T-cell (primary cell): ENCODE measurements at regions of chr7 and their contacts with region 1.

Region 1: DNA sequence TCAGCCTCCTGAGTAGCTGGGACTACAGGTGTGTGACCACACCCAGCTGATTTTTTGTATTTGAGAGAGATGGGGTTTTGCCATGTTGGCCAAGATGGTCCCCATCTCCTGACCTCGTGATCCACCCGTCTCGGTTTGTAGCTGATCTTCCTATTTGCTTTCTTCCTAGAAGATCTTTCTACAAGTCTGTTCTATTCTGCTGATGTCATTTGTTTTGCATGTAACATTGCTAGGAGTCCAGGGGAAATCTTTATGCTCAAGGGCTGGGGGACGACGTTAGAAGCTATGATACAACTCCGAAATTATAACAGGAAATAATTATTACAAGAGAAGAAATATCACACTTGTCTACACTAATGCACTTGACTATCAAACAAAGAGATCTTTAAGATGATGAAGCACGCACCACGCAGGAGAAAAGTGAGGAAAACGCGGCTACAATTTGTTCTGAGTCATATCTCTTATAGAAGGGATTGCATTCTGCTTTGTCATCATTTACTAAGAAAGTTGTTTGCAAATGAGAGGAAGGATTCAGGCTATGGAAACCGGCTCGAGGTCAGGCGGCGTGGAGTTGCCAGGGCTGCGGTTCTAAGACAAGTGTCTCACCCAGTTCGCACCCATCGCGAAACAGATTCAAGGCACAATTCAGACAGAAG is 103.0 kb upstream of the CARD11 start:
- DNase-seq: peak in 1 of 35 experiments; percentile 3
- ATAC-seq: no peak
- H3K4me3 ChIP-seq: no peak overlapping the region
- H3K4me3 Mint-ChIP-seq: no peak overlapping the region
- H3K27ac ChIP-seq: no peak overlapping the region
- H3K27ac Mint-ChIP-seq: no peak overlapping the region
- H3K4me1 ChIP-seq: no peaks in the 10 kb centered on the region
- H3K4me1 Mint-ChIP-seq: peaks cover 0 to 12% (median 11%) of the 10 kb centered on the region in 3 donors
- H3K27me3 ChIP-seq: peaks cover 0 to 6% of the 10 kb centered on the region in 2 experiments
- H3K27me3 Mint-ChIP-seq: peaks cover 0 to 3% of the 10 kb centered on the region in 2 donors

Region 2: DNA sequence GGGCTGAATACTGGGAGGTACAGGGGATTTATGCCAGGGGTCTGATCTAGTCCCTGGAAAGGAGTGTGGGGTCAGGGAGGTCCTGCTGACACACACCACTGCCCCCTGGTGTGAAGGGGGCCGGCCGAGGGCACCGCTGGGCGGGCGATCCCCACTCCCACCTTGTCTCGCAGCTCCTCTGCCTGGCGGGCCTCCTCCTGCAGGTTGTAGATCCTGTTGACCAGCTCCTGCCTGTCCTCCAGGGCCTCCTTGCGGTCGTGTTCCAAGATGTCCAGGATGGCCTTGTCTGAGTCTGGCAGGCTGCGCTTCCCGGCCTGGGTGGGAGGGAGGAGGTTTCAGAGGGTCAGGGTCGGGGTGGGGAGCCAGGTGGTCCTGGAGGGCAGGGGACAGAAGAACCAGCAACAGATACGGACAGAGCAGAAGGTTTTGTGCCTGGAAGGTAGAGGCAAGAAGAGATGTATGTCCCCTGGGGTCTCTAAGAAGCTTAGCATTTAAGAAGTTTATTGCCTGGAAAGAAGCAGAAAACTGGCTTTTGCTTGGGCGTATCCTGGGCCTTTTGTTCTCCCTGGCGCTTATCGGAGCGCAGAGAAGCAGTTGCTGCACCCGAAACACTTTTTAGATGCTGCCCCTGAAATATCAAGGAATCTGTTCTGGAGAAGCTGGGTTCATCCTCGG is 208.0 kb before region 1 on chr7:
- CTCF ChIA-PET with region 1: no interaction called
- POLR2A ChIA-PET with region 1: interaction called in 1 of 2 experiments, 13 read pairs
- DNase-seq: peak in 1 of 35 experiments; percentile 18
- ATAC-seq: no peak
- H3K4me3 ChIP-seq: no peak overlapping the region
- H3K4me3 Mint-ChIP-seq: no peak overlapping the region
- H3K27ac ChIP-seq: no peak overlapping the region
- H3K27ac Mint-ChIP-seq: no peak overlapping the region
- H3K4me1 ChIP-seq: no peaks in the 10 kb centered on the region
- H3K4me1 Mint-ChIP-seq: peaks cover 3 to 7% (median 6%) of the 10 kb centered on the region in 3 donors
- H3K27me3 ChIP-seq: no peaks in the 10 kb centered on the region
- H3K27me3 Mint-ChIP-seq: no peaks in the 10 kb centered on the region

Region 3: DNA sequence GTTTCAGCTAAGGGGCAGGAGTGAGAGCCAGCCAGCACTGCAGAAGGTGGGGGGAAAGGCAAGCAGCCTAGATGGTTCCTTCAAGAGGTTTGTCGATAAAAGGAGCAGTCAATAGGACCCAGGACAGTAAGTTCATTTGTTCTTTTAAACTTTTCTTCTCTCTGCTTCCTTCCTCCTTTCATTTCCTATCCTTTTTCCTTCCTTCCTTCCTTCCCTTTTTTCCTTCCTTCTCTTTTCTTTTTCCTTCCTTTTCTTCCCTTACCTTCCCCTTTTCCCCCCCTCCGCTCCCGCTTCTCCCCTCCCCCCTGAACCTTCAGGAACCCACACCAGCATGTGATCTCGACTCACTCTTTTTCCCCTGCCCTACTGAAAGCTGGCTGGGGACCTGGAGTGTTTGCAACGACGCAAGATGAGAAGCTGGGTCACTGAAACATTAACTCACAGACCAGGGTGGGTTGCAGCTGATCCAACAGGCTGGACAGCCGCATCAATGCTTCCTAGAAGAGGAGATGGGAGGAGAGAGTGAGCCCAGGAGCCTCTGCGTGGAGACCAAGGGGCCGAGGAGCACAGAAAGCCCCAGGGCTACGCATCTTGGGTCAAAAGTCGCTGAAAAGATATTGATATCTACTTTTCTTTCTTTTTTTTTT is 51.0 kb after region 1 on chr7:
- CTCF ChIA-PET with region 1: no interaction called
- POLR2A ChIA-PET with region 1: interaction called in 1 of 2 experiments, 17 read pairs
- DNase-seq: no peak
- ATAC-seq: no peak
- H3K4me3 ChIP-seq: no peak overlapping the region
- H3K4me3 Mint-ChIP-seq: no peak overlapping the region
- H3K27ac ChIP-seq: no peak overlapping the region
- H3K27ac Mint-ChIP-seq: no peak overlapping the region
- H3K4me1 ChIP-seq: no peaks in the 10 kb centered on the region
- H3K4me1 Mint-ChIP-seq: no peaks in the 10 kb centered on the region
- H3K27me3 ChIP-seq: peaks cover 0 to 17% of the 10 kb centered on the region in 2 experiments
- H3K27me3 Mint-ChIP-seq: peaks cover 0 to 4% of the 10 kb centered on the region in 2 donors